ENCODE measurements at regions of chr15 and their contacts with region 1.

Region 1: DNA sequence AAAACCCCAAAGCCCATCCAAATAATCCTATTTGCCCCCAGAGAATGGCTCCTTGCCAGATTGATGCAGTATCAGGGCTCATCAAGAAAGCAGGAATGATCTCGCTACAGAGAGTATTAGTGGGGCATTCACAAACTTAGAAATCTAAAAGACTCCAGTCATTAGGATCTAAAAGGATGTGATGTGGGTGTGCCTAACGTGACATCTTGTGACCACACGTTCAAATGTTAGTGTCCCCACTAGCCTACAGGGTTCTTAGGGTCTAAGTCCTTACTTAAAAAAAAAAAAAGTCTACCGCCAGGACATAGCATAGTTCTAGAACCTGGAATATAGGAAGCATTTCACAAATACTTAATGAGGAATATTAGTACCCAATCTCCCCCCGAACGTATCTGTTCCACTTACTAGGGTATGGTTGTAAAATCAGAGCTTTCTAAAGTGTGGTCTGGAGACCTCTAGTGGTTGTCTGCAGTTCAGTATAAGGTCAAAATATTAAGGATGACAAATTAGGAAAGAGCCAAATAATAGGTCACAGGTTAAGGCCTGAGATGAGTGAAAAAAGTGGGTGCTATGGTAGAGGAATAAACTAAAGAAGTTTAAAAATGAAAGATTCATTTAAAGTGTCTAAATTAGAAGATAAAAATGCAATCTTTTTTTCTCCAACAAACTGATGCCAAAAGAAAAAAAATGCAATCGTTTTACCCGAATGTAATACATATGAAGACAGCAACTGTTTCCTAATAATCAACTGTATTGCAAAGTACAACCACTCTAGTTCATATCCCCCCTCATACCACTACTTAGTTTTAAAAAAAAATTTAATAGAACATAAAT is 4.2 kb upstream of the CHRM5 start:
- DNase-seq: peak in 1 of 5 donors; percentile 49
- H3K4me3 ChIP-seq: no peak overlapping the region
- H3K27ac ChIP-seq: no peak overlapping the region
- H3K4me1 ChIP-seq: no peaks in the 10 kb centered on the region
- H3K27me3 ChIP-seq: no peaks in the 10 kb centered on the region
- CTCF ChIP-seq: peak; percentile 49

Region 2: GRCh38 chr15:33742800-33743199 is 221.2 kb before region 1 on chr15:
- intact Hi-C with region 1: loop called (anchors 10 kb)
- DNase-seq: no peak
- H3K4me3 ChIP-seq: no peak overlapping the region
- H3K27ac ChIP-seq: no peak overlapping the region
- H3K4me1 ChIP-seq: peaks cover 0 to 5% (median 0%) of the 10 kb centered on the region in 3 donors
- H3K27me3 ChIP-seq: no peaks in the 10 kb centered on the region
- CTCF ChIP-seq: no peak

Region 3: GRCh38 chr15:33780011-33780768 is 183.9 kb before region 1 on chr15:
- intact Hi-C with region 1: no loop called
- DNase-seq: no peak
- H3K4me3 ChIP-seq: no peak overlapping the region
- H3K27ac ChIP-seq: no peak overlapping the region
- H3K4me1 ChIP-seq: no peaks in the 10 kb centered on the region
- H3K27me3 ChIP-seq: no peaks in the 10 kb centered on the region
- CTCF ChIP-seq: no peak